ENCODE measurements at regions of chr17 and their contacts with region 1.

Region 1: DNA sequence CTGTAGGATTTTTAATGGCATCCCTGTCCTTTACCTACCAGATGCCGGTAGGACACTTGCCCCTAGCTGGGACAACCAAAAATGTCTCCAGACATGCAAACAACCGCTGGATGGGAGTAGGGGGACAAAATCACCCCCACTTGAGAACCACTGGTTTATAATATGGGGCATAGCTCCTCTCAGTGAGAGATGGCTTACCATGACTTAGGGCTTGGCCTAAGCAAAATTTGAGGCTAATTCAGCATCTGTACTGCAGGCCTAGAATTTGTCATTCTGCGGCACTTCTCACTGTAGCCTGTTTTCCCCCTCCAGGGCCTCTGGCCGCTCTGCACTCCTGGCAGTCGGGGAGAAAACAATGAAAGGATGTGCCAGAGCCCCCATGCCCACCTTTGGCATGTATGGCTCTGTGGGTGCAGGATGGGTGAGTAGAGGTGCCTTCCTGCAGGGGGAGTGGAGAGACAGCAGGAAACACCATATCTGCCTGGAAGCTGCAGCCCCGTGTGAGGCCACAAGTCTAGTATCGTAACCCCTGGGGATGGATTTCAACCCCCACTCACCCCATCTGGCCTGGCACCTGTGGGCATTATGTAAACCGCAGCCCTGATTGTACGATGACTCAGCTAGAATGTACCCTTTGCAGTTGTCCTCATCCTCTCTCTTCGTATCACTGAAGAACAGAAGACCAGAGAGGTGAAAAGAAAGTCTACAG is 268.1 kb downstream of the SOX9 start:
- DNase-seq: peak; percentile 93
- ATAC-seq: peak; percentile 77
- H3K4me3 ChIP-seq: no peak overlapping the region
- H3K27ac ChIP-seq: 0 out of 2 replicates have a peak overlapping the region, but pooled peaks have one; percentile 14
- H3K4me1 ChIP-seq: peaks cover 40% of the 10 kb centered on the region
- H3K27me3 ChIP-seq: no peaks in the 10 kb centered on the region
- CTCF ChIP-seq: peak; percentile 41 to 64 (median 47); a peak in 5 of 6 replicates
- EP300 ChIP-seq: peak in 1 of 2 experiments; percentile 62; a peak in 1 of 4 replicates
- POLR2A ChIP-seq: no peak
- RAD21 ChIP-seq: peak; percentile 55; the same call in 1 of the 2 replicates

Region 2: DNA sequence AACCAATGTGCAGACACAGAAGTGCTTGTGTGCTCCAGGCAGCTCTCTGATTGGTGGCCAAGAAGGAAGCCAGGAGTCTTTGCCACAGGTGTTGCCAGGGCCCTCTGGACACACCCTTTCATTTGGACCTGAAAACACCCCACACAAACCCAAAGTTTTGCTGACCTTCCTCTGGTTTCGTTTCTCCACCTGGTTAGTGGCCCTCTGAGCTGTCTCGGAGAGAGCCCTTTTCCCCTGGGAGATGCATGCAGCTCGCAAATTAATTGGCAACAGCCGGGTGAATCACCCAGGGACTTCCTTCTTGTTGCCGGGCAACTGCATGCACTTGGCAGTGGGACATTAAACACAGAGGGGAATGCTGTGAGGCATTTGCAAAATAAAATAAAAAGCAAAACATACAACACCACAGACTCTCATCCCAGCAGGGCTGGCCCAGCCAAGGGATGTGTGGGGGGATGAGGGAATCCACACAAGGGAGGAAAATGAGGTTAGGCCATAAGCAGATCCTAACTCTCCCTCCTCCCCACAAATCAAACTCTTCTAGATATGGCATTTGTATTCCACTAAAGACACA is 18.5 kb after region 1 on chr17:
- CTCF ChIA-PET with region 1: no interaction called
- POLR2A ChIA-PET with region 1: interaction called, 38 read pairs
- RAD21 ChIA-PET with region 1: interaction called, 20 read pairs
- SMC1A ChIA-PET with region 1: interaction called, 65 read pairs
- in situ Hi-C with region 1: no loop called
- intact Hi-C with region 1: no loop called
- DNase-seq: no peak
- ATAC-seq: peak; percentile 91
- H3K4me3 ChIP-seq: no peak overlapping the region
- H3K27ac ChIP-seq: peak overlapping the region; percentile 13; the same call in 1 of the 2 replicates
- H3K4me1 ChIP-seq: peaks cover 13% of the 10 kb centered on the region
- H3K27me3 ChIP-seq: no peaks in the 10 kb centered on the region
- CTCF ChIP-seq: no peak
- EP300 ChIP-seq: peak; percentile 58 to 76; a peak in 3 of 4 replicates
- POLR2A ChIP-seq: no peak
- RAD21 ChIP-seq: no peak

Region 3: GRCh38 chr17:72545766-72546165 is 156.8 kb after region 1 on chr17:
- CTCF ChIA-PET with region 1: no interaction called
- POLR2A ChIA-PET with region 1: no interaction called
- RAD21 ChIA-PET with region 1: no interaction called
- SMC1A ChIA-PET with region 1: no interaction called
- in situ Hi-C with region 1: no loop called
- intact Hi-C with region 1: no loop called
- DNase-seq: no peak
- ATAC-seq: no peak
- H3K4me3 ChIP-seq: no peak overlapping the region
- H3K27ac ChIP-seq: no peak overlapping the region
- H3K4me1 ChIP-seq: no peaks in the 10 kb centered on the region; the same call in 1 of the 2 replicates
- H3K27me3 ChIP-seq: no peaks in the 10 kb centered on the region
- CTCF ChIP-seq: no peak
- EP300 ChIP-seq: no peak
- POLR2A ChIP-seq: no peak
- RAD21 ChIP-seq: no peak

Measured in GM12878 (cell line).